ENCODE measurements at regions of chr7 and their contacts with region 1.

Region 1: DNA sequence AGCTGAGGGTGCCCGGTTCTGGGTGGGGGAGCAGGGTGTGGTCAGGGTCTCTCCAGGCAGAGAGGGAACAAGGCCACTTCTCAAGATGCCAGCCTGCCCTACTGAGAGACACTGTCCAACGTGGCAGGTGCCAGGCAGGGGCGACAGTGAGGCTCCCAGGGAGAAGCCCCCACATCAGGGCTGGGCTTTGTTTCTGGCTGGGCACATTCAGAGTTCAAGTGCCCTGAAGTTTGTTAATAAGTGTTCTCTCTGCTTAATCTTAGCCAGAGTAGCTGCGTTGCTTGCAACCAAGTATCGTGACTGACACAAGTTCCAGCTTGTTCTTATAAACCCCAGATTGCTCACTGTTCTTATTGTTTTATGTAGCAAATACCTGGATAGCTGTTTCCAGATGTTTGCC is 21.8 kb downstream of the FOXL3 start:
- DNase-seq: peak; percentile 22 to 38
- ATAC-seq: no peak
- H3K4me3 ChIP-seq: no peak overlapping the region
- H3K27ac ChIP-seq: no peak overlapping the region
- H3K4me1 ChIP-seq: no peaks in the 10 kb centered on the region
- H3K27me3 ChIP-seq: no peaks in the 10 kb centered on the region

Region 2: GRCh38 chr7:101146-102046 is 210.4 kb before region 1 on chr7:
- intact Hi-C with region 1: no loop called
- DNase-seq: no peak
- ATAC-seq: no peak
- H3K4me3 ChIP-seq: no peak overlapping the region
- H3K27ac ChIP-seq: no peak overlapping the region
- H3K4me1 ChIP-seq: no peaks in the 10 kb centered on the region
- H3K27me3 ChIP-seq: no peaks in the 10 kb centered on the region

Region 3: GRCh38 chr7:264541-265191 is 47.1 kb before region 1 on chr7:
- intact Hi-C with region 1: loop called in 1 of 2 experiments (anchors 2 kb)
- DNase-seq: peak; percentile 46 to 62
- ATAC-seq: no peak
- H3K4me3 ChIP-seq: no peak overlapping the region
- H3K27ac ChIP-seq: no peak overlapping the region
- H3K4me1 ChIP-seq: no peaks in the 10 kb centered on the region
- H3K27me3 ChIP-seq: no peaks in the 10 kb centered on the region

Region 4: GRCh38 chr7:322111-322671 is 10.4 kb after region 1 on chr7:
- intact Hi-C with region 1: no loop called
- DNase-seq: peak; percentile 62 to 92
- ATAC-seq: peak; percentile 88
- H3K4me3 ChIP-seq: no peak overlapping the region
- H3K27ac ChIP-seq: no peak overlapping the region
- H3K4me1 ChIP-seq: no peaks in the 10 kb centered on the region
- H3K27me3 ChIP-seq: no peaks in the 10 kb centered on the region

Measured in aorta (tissue), 5 donors.